ENCODE measurements at regions of chr6 and their contacts with region 1.

Region 1: DNA sequence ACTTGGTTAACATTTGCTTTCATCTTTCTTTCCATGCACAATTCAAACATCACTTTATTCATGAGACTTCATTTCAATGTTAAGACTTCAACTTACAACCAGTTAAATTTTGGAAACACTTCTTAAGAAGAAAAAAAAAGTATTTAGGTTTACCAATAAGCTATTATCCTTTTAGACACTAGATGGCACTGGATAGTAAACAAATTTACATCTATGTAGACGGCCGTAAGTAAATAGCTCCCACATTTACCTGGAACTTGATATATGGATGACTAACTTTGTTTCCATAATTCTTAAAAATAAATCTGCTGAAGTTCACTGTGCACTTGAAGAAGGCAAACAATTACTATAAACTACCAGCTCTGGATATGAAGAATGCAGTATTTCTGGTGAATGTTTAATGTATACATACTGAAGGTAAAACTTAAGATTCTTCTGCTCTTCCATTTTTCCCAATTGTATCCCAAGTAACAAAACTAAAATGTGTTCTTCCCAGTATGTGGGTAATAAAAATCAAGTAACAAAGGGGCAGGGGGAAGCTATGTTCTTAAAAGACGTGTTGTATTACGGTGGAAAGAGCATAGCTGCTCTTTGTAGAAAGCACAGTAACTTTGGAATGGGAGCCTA is 130.6 kb upstream of the C6orf118 start:
- DNase-seq: peak; percentile 27
- H3K4me3 ChIP-seq: no peak overlapping the region; a peak in 1 of 4 replicates
- H3K27ac ChIP-seq: no peak overlapping the region
- H3K4me1 ChIP-seq: no peaks in the 10 kb centered on the region
- H3K27me3 ChIP-seq: no peaks in the 10 kb centered on the region
- CTCF ChIP-seq: peak; percentile 70
- EP300 ChIP-seq: no peak
- RAD21 ChIP-seq: peak; percentile 73

Region 2: GRCh38 chr6:165426892-165427291 is 13.1 kb before region 1 on chr6:
- CTCF ChIA-PET with region 1: interaction called, 15 read pairs
- POLR2A ChIA-PET with region 1: no interaction called
- DNase-seq: no peak
- H3K4me3 ChIP-seq: no peak overlapping the region
- H3K27ac ChIP-seq: no peak overlapping the region
- H3K4me1 ChIP-seq: no peaks in the 10 kb centered on the region
- H3K27me3 ChIP-seq: no peaks in the 10 kb centered on the region
- CTCF ChIP-seq: no peak
- EP300 ChIP-seq: no peak
- RAD21 ChIP-seq: no peak

Region 3: GRCh38 chr6:165456286-165456685 is 16.2 kb after region 1 on chr6:
- CTCF ChIA-PET with region 1: interaction called, 28 read pairs
- POLR2A ChIA-PET with region 1: no interaction called
- DNase-seq: no peak
- H3K4me3 ChIP-seq: no peak overlapping the region
- H3K27ac ChIP-seq: no peak overlapping the region
- H3K4me1 ChIP-seq: no peaks in the 10 kb centered on the region
- H3K27me3 ChIP-seq: no peaks in the 10 kb centered on the region
- CTCF ChIP-seq: no peak
- EP300 ChIP-seq: no peak
- RAD21 ChIP-seq: no peak

Region 4: DNA sequence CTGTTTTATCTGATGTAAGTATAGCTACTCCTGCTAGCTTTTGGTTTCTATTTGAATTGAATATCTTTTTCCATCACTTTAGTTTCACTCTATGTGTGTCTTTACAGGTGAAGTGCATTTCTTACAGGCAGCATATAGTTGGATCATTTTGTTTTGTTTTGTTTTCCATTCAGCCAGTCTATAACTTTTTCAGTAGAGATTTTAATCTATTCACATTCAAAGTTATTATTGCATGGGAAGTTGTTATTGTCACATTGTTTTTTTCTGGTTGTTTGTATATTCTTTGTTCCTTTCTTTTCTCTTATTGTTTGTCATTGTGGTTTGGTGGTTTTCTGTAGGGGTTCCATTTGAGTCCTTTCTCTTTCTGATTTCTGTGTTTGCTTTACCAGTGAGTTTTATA is 71.8 kb after region 1 on chr6:
- CTCF ChIA-PET with region 1: no interaction called
- POLR2A ChIA-PET with region 1: no interaction called
- DNase-seq: no peak
- H3K4me3 ChIP-seq: no peak overlapping the region
- H3K27ac ChIP-seq: no peak overlapping the region
- H3K4me1 ChIP-seq: no peaks in the 10 kb centered on the region; a peak in 1 of 4 replicates
- H3K27me3 ChIP-seq: no peaks in the 10 kb centered on the region
- CTCF ChIP-seq: no peak
- EP300 ChIP-seq: no peak
- RAD21 ChIP-seq: no peak

Region 5: GRCh38 chr6:165842281-165842936 is 402.4 kb after region 1 on chr6:
- CTCF ChIA-PET with region 1: interaction called, 41 read pairs
- POLR2A ChIA-PET with region 1: no interaction called
- DNase-seq: no peak
- H3K4me3 ChIP-seq: no peak overlapping the region
- H3K27ac ChIP-seq: no peak overlapping the region
- H3K4me1 ChIP-seq: no peaks in the 10 kb centered on the region; a peak in 1 of 4 replicates
- H3K27me3 ChIP-seq: no peaks in the 10 kb centered on the region
- CTCF ChIP-seq: no peak
- EP300 ChIP-seq: no peak
- RAD21 ChIP-seq: no peak

Region 6: GRCh38 chr6:165850434-165851019 is 410.5 kb after region 1 on chr6:
- CTCF ChIA-PET with region 1: interaction called, 130 read pairs
- POLR2A ChIA-PET with region 1: no interaction called
- DNase-seq: peak; percentile 82
- H3K4me3 ChIP-seq: peak overlapping the region in 1 of 2 experiments; percentile 48; a peak in 1 of 4 replicates
- H3K27ac ChIP-seq: no peak overlapping the region
- H3K4me1 ChIP-seq: no peaks in the 10 kb centered on the region; a peak in 1 of 4 replicates
- H3K27me3 ChIP-seq: no peaks in the 10 kb centered on the region
- CTCF ChIP-seq: peak; percentile 81
- EP300 ChIP-seq: no peak
- RAD21 ChIP-seq: peak; percentile 87

Region 7: GRCh38 chr6:165884813-165885765 is 445.0 kb after region 1 on chr6:
- CTCF ChIA-PET with region 1: interaction called, 12 read pairs
- POLR2A ChIA-PET with region 1: no interaction called
- DNase-seq: peak; percentile 82
- H3K4me3 ChIP-seq: no peak overlapping the region; a peak in 1 of 4 replicates
- H3K27ac ChIP-seq: no peak overlapping the region
- H3K4me1 ChIP-seq: peaks cover 0 to 3% of the 10 kb centered on the region in 2 experiments; a peak in 1 of 4 replicates
- H3K27me3 ChIP-seq: no peaks in the 10 kb centered on the region
- CTCF ChIP-seq: peak; percentile 49
- EP300 ChIP-seq: no peak
- RAD21 ChIP-seq: peak; percentile 88

Region 8: DNA sequence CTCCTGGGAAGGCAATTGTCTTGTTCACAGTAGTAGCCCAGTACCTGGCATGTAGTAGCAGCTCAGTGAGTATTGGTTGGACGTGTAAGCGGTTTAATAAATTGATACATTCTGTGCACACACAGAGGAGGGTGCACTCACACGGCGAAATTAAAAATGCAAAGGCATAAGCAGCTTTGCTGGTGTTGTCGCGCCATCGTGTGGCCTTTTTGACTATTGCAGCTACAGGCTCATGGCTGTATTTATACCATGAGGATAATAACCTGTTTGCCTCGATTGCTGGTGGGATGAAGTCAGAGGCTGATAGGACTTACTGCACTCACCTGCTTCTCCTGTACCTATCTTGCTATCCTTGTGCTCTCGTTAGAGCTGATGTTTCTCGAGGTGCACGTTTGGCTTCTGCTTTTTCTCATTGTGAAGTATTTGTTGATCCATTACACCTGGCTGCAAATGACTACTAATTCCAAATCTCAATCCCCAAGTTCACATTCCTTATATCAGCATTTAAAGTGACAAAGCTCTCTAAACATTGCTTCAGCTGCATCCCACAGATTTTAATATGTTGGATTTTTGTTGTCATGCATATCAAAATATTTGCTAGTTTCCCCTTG is 666.1 kb after region 1 on chr6:
- CTCF ChIA-PET with region 1: interaction called, 10 read pairs
- POLR2A ChIA-PET with region 1: no interaction called
- DNase-seq: peak; percentile 62
- H3K4me3 ChIP-seq: no peak overlapping the region; a peak in 1 of 4 replicates
- H3K27ac ChIP-seq: no peak overlapping the region
- H3K4me1 ChIP-seq: no peaks in the 10 kb centered on the region; a peak in 1 of 4 replicates
- H3K27me3 ChIP-seq: no peaks in the 10 kb centered on the region
- CTCF ChIP-seq: peak; percentile 75
- EP300 ChIP-seq: no peak
- RAD21 ChIP-seq: peak; percentile 96